ENCODE measurements at regions of chr2 and their contacts with region 1.

Region 1: GRCh38 chr2:174688079-174688478 is 76.2 kb downstream of the CHRNA1 start:
- DNase-seq: peak in 2 of 4 donors; percentile 8 to 19
- ATAC-seq: peak; percentile 59
- H3K4me3 ChIP-seq: no peak overlapping the region
- H3K27ac ChIP-seq: no peak overlapping the region
- H3K4me1 ChIP-seq: peaks cover 0 to 4% of the 10 kb centered on the region in 2 donors
- H3K27me3 ChIP-seq: no peaks in the 10 kb centered on the region
- CTCF ChIP-seq: peak; percentile 18 to 31

Region 2: DNA sequence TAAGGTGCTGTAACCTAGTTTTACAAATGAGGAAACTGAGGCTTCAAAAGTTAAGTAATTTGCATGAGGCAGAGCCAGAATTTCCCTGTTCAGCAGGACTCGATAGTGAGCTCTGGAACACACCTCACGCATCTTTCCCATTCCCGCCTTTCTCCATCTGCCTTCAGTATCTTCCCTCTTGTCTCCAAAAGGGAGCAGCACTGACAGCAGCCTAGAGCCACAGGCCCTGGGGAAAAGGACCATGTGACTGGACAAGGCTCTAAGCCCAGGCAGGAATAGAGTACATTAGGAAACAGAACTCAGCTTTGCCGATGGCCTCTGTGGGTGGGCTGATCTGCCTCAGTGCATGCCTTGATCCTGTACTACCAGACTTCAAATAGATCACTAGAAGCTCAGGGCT is 222.8 kb before region 1 on chr2:
- intact Hi-C with region 1: loop called in 1 of 2 experiments (anchors 5 kb)
- DNase-seq: peak in 1 of 4 donors; percentile 11
- ATAC-seq: no peak
- H3K4me3 ChIP-seq: no peak overlapping the region
- H3K27ac ChIP-seq: no peak overlapping the region
- H3K4me1 ChIP-seq: no peaks in the 10 kb centered on the region
- H3K27me3 ChIP-seq: no peaks in the 10 kb centered on the region
- CTCF ChIP-seq: no peak

Region 3: GRCh38 chr2:174878537-174879147 is 190.6 kb after region 1 on chr2:
- intact Hi-C with region 1: no loop called
- DNase-seq: peak in 1 of 4 donors; percentile 70
- ATAC-seq: no peak
- H3K4me3 ChIP-seq: peak overlapping the region; percentile 5 to 24
- H3K27ac ChIP-seq: no peak overlapping the region
- H3K4me1 ChIP-seq: no peaks in the 10 kb centered on the region
- H3K27me3 ChIP-seq: no peaks in the 10 kb centered on the region
- CTCF ChIP-seq: no peak

Measured in left lung (tissue), 14 donors.